ENCODE measurements at regions of chr1 and their contacts with region 1.

Region 1: DNA sequence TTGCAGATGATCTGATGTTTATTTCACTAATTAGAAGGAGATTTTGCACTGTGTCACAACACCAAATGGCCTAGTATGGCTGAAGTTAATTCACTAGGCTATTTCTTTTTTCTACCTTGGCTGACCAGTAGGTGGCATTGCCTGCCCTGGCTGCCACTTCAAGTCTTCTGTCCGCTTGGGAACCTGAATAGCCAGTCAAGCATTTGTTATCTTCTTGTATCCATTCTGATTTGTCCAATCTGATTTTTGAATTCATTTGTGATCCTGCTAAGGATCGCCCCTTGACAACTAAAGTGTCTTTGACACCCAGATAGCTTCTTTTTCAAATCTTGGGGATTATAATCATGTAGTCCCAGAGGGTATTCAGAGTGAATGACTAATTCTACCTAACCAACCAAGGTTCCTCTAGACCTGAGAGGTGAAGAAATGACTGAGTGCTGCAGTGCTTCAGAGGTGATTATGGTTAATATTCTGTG is 99.4 kb downstream of the GIPC2 start:
- DNase-seq: peak; percentile 69
- H3K4me3 ChIP-seq: no peak overlapping the region
- H3K27ac ChIP-seq: no peak overlapping the region
- H3K4me1 ChIP-seq: no peaks in the 10 kb centered on the region
- H3K27me3 ChIP-seq: no peaks in the 10 kb centered on the region
- CTCF ChIP-seq: peak; percentile 51 to 78 (median 70)
- EP300 ChIP-seq: no peak
- POLR2A ChIP-seq: no peak

Region 2: GRCh38 chr1:78607334-78607927 is 462.3 kb after region 1 on chr1:
- intact Hi-C with region 1: loop called (anchors 1 kb)
- DNase-seq: no peak
- H3K4me3 ChIP-seq: no peak overlapping the region
- H3K27ac ChIP-seq: no peak overlapping the region
- H3K4me1 ChIP-seq: peaks cover 0 to 5% (median 0%) of the 10 kb centered on the region in 4 donors
- H3K27me3 ChIP-seq: no peaks in the 10 kb centered on the region
- CTCF ChIP-seq: peak in 2 of 4 experiments; percentile 39 to 55
- EP300 ChIP-seq: no peak
- POLR2A ChIP-seq: no peak

Region 3: DNA sequence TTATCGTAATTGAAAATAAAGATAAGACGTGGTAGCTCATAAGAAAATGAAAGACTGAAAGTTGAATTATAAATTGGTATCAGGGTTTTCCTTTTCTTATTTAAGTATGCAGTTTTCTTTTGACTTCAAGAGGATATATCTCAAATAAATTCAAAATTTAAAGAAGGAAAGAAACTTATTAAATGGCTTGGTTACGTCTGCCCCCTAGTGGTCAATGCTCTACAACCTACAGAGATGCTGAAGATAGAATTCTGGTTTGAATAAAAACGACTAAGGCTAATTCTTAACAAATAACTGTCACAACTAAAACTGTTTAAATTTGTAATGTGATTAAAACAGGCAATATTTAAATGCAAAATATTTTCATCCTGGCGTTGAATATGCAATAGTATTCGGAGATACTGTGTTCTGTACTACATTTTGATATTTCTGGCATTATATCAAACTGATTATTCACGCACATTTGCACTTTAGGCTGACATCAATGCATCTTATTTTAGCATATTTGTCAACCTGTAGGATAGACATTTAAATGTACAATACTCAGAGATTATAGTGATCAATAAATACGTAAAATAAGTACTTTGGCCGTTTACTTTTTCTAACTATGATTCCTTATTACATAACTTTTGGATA is 531.3 kb after region 1 on chr1:
- intact Hi-C with region 1: loop called (anchors 5 kb)
- DNase-seq: peak; percentile 74
- H3K4me3 ChIP-seq: no peak overlapping the region
- H3K27ac ChIP-seq: no peak overlapping the region
- H3K4me1 ChIP-seq: no peaks in the 10 kb centered on the region
- H3K27me3 ChIP-seq: no peaks in the 10 kb centered on the region
- CTCF ChIP-seq: peak; percentile 34 to 85 (median 72)
- EP300 ChIP-seq: no peak
- POLR2A ChIP-seq: no peak